WTC11 (cell line): ENCODE measurements at regions of chr5 and their contacts with region 1.

Region 1: DNA sequence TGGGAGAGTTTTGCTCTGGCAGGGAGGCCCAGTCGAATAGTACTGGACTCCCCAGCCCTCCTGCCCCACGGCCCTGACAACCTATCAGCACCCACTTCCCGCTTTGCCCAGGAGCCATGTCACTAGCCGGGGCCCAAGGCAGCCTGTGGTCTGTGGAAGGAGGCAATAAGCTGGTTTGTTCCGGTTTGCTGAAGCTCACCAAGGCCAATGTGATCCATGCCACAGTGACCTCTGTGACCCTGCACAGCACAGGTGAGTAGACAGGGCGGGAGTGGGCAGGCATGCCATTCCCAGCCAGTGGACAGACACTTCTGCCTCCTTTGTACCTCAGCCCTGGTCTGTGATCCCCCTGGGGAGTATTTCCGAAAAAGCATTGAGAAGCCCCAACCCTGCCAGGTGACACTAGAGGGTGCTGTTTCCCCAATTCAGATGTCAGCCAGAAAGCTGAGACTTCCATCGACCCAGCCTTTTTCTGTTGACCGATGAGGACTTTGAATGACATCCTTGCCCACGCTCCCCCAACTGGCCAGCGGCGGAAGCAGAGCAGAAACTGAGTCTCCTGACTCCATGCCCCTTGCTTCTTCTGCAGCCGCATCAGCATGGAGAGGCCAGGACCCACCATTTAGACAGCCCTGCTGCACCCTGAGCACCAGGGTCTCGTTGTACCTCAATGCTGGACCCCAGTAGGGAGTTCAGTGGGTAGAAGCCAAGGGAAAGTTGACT is 9.6 kb downstream of the PCYOX1L start:
- DNase-seq: peak; percentile 87
- ATAC-seq: peak; percentile 85
- H3K4me3 Mint-ChIP-seq: no peak overlapping the region
- H3K27ac Mint-ChIP-seq: no peak overlapping the region
- H3K4me1 Mint-ChIP-seq: peaks cover 15% of the 10 kb centered on the region
- H3K27me3 Mint-ChIP-seq: no peaks in the 10 kb centered on the region
- CTCF ChIP-seq: peak; percentile 65; the same call in 1 of the 2 replicates

Region 2: GRCh38 chr5:149113669-149114068 is 253.7 kb before region 1 on chr5:
- CTCF ChIA-PET with region 1: no interaction called
- POLR2A ChIA-PET with region 1: no interaction called
- DNase-seq: no peak
- ATAC-seq: no peak
- H3K4me3 Mint-ChIP-seq: no peak overlapping the region
- H3K27ac Mint-ChIP-seq: no peak overlapping the region
- H3K4me1 Mint-ChIP-seq: no peaks in the 10 kb centered on the region
- H3K27me3 Mint-ChIP-seq: no peaks in the 10 kb centered on the region; the same call in 1 of the 2 replicates
- CTCF ChIP-seq: no peak

Region 3: DNA sequence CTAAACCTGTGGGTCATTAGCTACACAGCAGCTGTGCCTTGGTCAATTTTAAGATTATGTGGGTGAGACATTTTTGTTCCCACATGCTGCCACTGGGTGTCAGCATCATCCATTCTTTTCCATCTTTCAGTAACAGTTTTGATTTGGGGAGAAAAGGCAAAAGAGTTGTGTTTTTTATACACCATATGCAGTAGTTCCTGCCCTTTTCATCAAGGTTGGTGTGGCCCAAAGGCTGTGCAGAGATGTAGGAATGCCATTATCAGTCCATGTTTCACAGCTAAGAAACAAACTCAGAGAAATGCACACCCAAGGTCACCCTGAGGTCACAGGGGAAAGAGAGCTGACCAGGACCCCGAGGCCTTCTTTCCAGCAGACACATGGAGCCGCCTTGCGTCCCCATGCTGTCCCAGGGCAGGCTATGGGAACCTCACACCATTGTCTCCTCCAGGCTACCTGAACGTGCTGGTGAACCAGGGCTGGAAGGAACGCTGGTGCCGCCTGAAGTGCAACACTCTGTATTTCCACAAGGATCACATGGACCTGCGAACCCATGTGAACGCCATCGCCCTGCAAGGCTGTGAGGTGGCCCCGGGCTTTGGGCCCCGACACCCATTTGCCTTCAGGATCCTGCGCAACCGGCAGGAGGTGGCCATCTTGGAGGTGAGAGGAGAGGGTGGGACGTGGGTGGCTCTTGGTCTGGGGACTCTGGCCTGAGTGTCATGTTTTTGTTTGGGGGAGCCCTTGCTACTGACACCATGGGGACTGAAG is 49.9 kb before region 1 on chr5:
- CTCF ChIA-PET with region 1: interaction called, 22 read pairs
- POLR2A ChIA-PET with region 1: no interaction called
- DNase-seq: no peak
- ATAC-seq: peak; percentile 52
- H3K4me3 Mint-ChIP-seq: no peak overlapping the region
- H3K27ac Mint-ChIP-seq: no peak overlapping the region; the same call in 1 of the 2 replicates
- H3K4me1 Mint-ChIP-seq: peaks cover 16% of the 10 kb centered on the region
- H3K27me3 Mint-ChIP-seq: no peaks in the 10 kb centered on the region; the same call in 1 of the 2 replicates
- CTCF ChIP-seq: 0 out of 2 replicates have a peak, but pooled peaks have one; percentile 24

Region 4: DNA sequence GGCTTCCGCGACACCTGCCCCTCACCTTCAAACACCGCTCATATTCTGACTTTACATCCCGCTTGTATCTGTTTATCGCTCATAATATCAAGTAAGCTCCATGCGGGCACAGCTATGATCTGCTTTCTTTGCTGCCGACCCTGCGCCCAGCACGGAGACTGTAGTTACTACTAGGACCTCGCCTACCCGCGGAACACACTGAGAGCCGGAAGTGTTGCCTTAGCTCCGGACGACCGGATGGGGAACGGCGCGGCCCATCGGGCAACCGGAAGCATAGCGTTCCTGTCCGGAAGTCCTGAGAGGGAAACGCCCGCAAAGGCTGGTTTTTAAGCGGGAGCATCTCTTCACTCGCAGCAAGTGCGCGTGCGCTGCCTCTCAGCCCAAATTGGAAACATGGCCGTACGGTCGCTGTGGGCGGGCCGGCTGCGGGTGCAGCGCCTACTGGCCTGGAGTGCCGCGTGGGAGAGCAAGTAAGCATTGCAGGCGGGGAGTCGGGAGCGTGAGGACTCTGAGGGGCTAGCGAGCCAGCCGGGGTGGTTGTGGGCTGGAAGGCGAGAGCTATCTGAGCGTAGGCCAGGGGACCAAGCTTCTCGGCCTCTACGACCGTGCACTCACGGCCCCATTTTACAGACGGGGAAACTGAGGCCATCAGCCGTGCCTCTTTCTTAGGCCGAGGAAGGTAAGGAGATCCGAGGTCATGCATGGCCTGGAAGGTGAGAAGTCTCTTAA is 22.1 kb before region 1 on chr5 and contains the start of gene GRPEL2:
- CTCF ChIA-PET with region 1: interaction called, 15 read pairs
- POLR2A ChIA-PET with region 1: no interaction called
- DNase-seq: peak; percentile 94
- ATAC-seq: peak; percentile 97
- H3K4me3 Mint-ChIP-seq: peak within 1 kb of the TSS; percentile 89
- H3K27ac Mint-ChIP-seq: peak within 1 kb of the TSS; percentile 90
- H3K4me1 Mint-ChIP-seq: peaks cover 20% of the 10 kb centered on the region
- H3K27me3 Mint-ChIP-seq: peaks cover 13% of the 10 kb centered on the region
- CTCF ChIP-seq: no peak
- total RNA-seq, gene GRPEL2: 35.3 to 48.6 TPM (median 35.5 TPM) in 3 replicates

Region 5: GRCh38 chr5:149381987-149382340 is 14.6 kb after region 1 on chr5:
- CTCF ChIA-PET with region 1: interaction called, 59 read pairs
- POLR2A ChIA-PET with region 1: interaction called, 3 read pairs
- DNase-seq: peak; percentile 93
- ATAC-seq: peak; percentile 91
- H3K4me3 Mint-ChIP-seq: no peak overlapping the region
- H3K27ac Mint-ChIP-seq: no peak overlapping the region
- H3K4me1 Mint-ChIP-seq: peaks cover 12% of the 10 kb centered on the region
- H3K27me3 Mint-ChIP-seq: no peaks in the 10 kb centered on the region
- CTCF ChIP-seq: peak; percentile 92

Region 6: DNA sequence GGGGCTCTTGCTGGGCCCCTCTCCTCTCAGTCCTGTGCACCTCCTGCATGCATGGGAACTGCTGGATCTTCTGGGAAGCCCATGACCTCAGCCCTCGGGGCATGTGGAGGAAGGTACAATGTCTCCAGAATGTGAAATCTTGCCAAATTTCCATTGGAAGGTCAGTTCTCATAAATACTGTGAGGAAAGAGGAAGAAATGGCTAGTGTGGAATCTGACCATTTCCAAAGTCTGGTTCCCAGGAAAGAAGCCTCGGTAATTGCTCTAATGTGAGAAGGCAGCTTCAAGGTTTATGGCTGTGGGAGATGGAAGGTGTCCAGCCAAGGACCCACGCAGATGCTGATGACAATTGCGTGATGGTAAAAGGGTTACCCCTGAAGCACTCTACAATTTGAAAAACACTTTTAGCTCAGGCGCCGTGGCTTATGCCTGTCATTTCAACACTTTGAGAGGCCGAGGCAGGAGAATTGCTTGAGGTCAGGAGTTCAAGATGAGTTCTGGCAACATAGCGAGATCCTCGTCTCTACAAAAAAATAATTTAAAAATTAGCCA is 19.7 kb after region 1 on chr5:
- CTCF ChIA-PET with region 1: interaction called, 59 read pairs
- POLR2A ChIA-PET with region 1: interaction called, 3 read pairs
- DNase-seq: no peak
- ATAC-seq: no peak
- H3K4me3 Mint-ChIP-seq: no peak overlapping the region
- H3K27ac Mint-ChIP-seq: no peak overlapping the region
- H3K4me1 Mint-ChIP-seq: peaks cover 5% of the 10 kb centered on the region
- H3K27me3 Mint-ChIP-seq: no peaks in the 10 kb centered on the region
- CTCF ChIP-seq: no peak

Region 7: GRCh38 chr5:149422366-149423048 is 55.1 kb after region 1 on chr5:
- CTCF ChIA-PET with region 1: interaction called, 12 read pairs
- POLR2A ChIA-PET with region 1: no interaction called
- DNase-seq: peak; percentile 49
- ATAC-seq: peak; percentile 43
- H3K4me3 Mint-ChIP-seq: no peak overlapping the region
- H3K27ac Mint-ChIP-seq: no peak overlapping the region
- H3K4me1 Mint-ChIP-seq: peaks cover 46% of the 10 kb centered on the region
- H3K27me3 Mint-ChIP-seq: no peaks in the 10 kb centered on the region
- CTCF ChIP-seq: no peak

Region 8: DNA sequence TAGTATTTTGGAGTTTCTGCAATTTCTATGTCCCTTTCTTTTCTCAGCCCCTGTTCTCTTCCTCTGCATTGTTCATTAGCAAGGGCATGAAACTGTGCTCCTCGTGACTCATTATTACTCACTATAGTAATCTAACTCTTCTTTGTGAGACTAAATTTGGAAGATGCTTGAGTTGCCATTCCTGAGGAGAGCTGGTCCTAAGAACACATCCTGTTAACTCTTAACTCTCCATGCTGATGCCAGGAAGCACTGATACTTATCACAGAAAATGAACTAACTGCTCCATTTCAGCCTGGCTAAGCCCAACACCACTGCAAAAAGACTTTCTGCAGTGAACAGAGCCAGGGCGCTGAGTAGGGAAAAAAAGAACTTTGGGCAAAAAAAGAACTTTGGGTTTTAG is 194.4 kb after region 1 on chr5:
- CTCF ChIA-PET with region 1: interaction called, 14 read pairs
- POLR2A ChIA-PET with region 1: no interaction called
- DNase-seq: no peak
- ATAC-seq: peak; percentile 58
- H3K4me3 Mint-ChIP-seq: no peak overlapping the region
- H3K27ac Mint-ChIP-seq: peak overlapping the region; percentile 94
- H3K4me1 Mint-ChIP-seq: peaks cover 38% of the 10 kb centered on the region
- H3K27me3 Mint-ChIP-seq: no peaks in the 10 kb centered on the region
- CTCF ChIP-seq: no peak